ENCODE measurements at regions of chr7 and their contacts with region 1.

Region 1: GRCh38 chr7:151123822-151124464 is 37.7 kb downstream of the AGAP3 start:
- DNase-seq: peak; percentile 91
- ATAC-seq: peak; percentile 99
- H3K4me3 Mint-ChIP-seq: no peak overlapping the region
- H3K27ac Mint-ChIP-seq: no peak overlapping the region
- H3K4me1 Mint-ChIP-seq: peaks cover 5% of the 10 kb centered on the region
- H3K27me3 Mint-ChIP-seq: no peaks in the 10 kb centered on the region

Region 2: DNA sequence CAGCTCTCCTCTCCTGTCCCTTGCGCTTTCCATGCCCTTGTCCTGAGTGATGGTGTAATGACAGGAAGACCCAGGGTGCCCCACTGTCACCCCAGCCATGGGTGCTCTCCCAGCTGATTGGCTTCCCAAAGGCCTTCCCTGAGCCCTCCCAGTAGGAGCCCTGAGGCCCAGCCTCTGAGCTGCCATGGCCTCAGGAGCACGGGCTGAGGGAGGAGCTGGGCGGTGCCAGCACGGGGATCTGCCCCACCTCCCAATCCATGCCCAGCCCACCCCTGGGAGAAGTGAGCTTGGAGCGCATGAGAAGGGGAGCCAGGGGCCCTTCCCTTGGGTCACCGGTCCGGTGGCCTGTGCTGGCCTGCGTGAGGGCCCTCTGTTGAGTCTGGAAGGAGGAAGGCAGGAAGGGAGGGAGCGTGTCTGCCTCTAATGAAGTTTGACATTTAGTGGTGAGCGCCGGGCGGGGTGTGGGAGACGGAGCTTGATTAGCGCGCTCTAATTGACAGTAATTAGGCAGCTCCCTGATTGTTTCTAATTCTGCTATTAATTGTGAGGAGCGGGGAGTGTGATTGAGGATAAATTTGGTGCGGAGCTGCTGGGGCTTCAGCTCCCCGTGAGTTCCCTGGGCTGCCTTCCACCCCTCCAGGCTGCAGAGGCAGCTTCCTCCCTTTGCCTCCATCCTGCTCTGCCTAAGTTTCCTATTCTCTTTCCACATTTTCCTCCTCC is 15.3 kb after region 1 on chr7:
- CTCF ChIA-PET with region 1: interaction called, 16 read pairs
- POLR2A ChIA-PET with region 1: no interaction called
- intact Hi-C with region 1: no loop called
- DNase-seq: no peak
- ATAC-seq: no peak
- H3K4me3 Mint-ChIP-seq: no peak overlapping the region
- H3K27ac Mint-ChIP-seq: no peak overlapping the region
- H3K4me1 Mint-ChIP-seq: no peaks in the 10 kb centered on the region
- H3K27me3 Mint-ChIP-seq: no peaks in the 10 kb centered on the region

Region 3: GRCh38 chr7:151244196-151244840 is 120.4 kb after region 1 on chr7:
- CTCF ChIA-PET with region 1: interaction called, 10 read pairs
- POLR2A ChIA-PET with region 1: no interaction called
- intact Hi-C with region 1: loop called (anchors 1 to 10 kb)
- DNase-seq: peak; percentile 81
- ATAC-seq: peak; percentile 27
- H3K4me3 Mint-ChIP-seq: peak overlapping the region; percentile 58
- H3K27ac Mint-ChIP-seq: no peak overlapping the region
- H3K4me1 Mint-ChIP-seq: peaks cover 36% of the 10 kb centered on the region
- H3K27me3 Mint-ChIP-seq: peaks cover 23% of the 10 kb centered on the region

Measured in activated CD4-positive, alpha-beta T cell treated with anti-CD3 and anti-CD28 coated beads for 36 hours (primary cell).